Gastrocnemius medialis (tissue), 4 donors: ENCODE measurements at regions of chr9 and their contacts with region 1.

Region 1: DNA sequence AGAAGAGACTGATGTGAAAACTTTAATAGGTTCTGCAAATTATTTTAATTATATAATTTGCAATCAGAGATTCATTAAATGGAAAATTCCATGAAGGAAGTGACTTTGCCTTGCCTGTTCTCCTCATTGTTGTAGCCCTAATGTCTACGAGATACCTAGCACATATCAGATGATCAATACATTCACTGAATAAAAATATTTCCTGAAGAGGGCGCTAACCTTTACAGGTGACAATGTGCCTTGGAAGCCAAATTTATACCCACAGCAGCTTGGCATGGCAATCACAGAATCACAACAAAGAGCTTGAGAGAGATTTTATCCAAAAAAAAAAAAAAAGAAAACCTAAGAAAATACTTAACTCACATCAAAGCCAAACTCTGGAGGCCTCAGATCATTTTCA is 17.4 kb downstream of the HAUS6 start:
- DNase-seq: no peak
- ATAC-seq: no peak
- H3K4me3 ChIP-seq: no peak overlapping the region
- H3K27ac ChIP-seq: no peak overlapping the region
- H3K4me1 ChIP-seq: no peaks in the 10 kb centered on the region
- H3K27me3 ChIP-seq: no peaks in the 10 kb centered on the region
- CTCF ChIP-seq: peak in 3 of 5 experiments; percentile 19 to 39 (median 28)
- POLR2A ChIP-seq: no peak

Region 2: GRCh38 chr9:19174127-19174912 is 89.0 kb after region 1 on chr9:
- in situ Hi-C with region 1: loop called in 1 of 4 experiments (anchors 10 kb)
- intact Hi-C with region 1: loop called (anchors 1 kb)
- DNase-seq: peak; percentile 62 to 83
- ATAC-seq: peak; percentile 95 to 99
- H3K4me3 ChIP-seq: no peak overlapping the region
- H3K27ac ChIP-seq: peak overlapping the region in 1 of 4 donors; percentile 28
- H3K4me1 ChIP-seq: peaks cover 4 to 15% of the 10 kb centered on the region in 2 donors
- H3K27me3 ChIP-seq: no peaks in the 10 kb centered on the region
- CTCF ChIP-seq: peak in 4 of 5 experiments; percentile 51 to 70 (median 54)
- POLR2A ChIP-seq: no peak

Region 3: DNA sequence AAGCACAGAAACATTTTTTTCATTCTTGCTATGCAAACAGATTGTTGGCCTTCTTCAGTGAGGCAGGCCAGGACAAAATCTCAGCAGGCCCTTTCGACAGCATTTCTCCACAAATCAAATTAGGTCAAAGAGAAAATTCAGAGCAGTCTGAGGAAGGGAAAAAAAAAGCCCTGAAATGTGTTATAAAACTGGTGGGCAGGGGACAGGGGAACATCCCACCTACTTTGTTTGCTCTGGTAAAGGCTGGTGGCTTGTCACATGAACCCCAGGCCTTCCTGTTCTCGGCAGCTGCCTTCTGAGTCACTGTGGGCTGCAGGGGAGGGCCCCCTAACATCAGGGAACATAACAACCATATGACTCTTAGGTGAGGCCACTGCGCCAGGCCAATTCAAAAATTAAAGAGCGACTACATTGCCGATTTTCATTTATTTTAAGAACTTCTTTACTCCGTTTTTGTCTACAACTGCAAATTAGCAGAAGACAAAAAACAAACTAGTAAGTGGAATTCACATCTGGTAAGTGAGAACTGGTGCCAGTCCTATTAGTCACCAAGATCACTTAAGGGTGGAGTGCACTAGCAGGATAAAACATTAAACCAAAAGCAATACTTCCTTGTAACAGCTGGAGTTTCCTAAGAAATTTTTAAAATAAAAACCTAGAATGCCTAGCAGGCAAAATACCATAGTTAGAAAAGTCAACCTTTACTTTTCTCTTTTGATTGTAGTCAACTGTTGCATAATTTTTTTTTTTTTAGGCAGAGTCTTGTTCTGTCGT is 99.0 kb after region 1 on chr9:
- in situ Hi-C with region 1: loop called in 2 of 4 experiments (anchors 10 kb)
- intact Hi-C with region 1: no loop called
- DNase-seq: peak; percentile 70 to 75
- ATAC-seq: peak; percentile 81 to 95
- H3K4me3 ChIP-seq: no peak overlapping the region
- H3K27ac ChIP-seq: peak overlapping the region; percentile 69 to 79 (median 76)
- H3K4me1 ChIP-seq: peaks cover 16% of the 10 kb centered on the region in 2 donors
- H3K27me3 ChIP-seq: no peaks in the 10 kb centered on the region
- CTCF ChIP-seq: no peak
- POLR2A ChIP-seq: peak in 1 of 2 donors; percentile 47